ENCODE measurements at regions of chr5 and their contacts with region 1.

Region 1: GRCh38 chr5:175478384-175479124 is at the start of gene SFXN1:
- DNase-seq: no peak
- ATAC-seq: peak; percentile 91
- H3K4me3 ChIP-seq: peak within 1 kb of the TSS; percentile 75
- H3K27ac ChIP-seq: peak within 1 kb of the TSS; percentile 66
- H3K4me1 ChIP-seq: no peaks in the 10 kb centered on the region
- H3K27me3 ChIP-seq: 0 out of 4 replicates have a peak, but pooled peaks cover 0 to 2% of the 10 kb centered on the region in 2 experiments
- CTCF ChIP-seq: no peak
- EP300 ChIP-seq: no peak
- POLR2A ChIP-seq: peak; percentile 91
- RAD21 ChIP-seq: no peak
- polyA plus RNA-seq, gene SFXN1: 18.0 to 24.6 TPM

Region 2: DNA sequence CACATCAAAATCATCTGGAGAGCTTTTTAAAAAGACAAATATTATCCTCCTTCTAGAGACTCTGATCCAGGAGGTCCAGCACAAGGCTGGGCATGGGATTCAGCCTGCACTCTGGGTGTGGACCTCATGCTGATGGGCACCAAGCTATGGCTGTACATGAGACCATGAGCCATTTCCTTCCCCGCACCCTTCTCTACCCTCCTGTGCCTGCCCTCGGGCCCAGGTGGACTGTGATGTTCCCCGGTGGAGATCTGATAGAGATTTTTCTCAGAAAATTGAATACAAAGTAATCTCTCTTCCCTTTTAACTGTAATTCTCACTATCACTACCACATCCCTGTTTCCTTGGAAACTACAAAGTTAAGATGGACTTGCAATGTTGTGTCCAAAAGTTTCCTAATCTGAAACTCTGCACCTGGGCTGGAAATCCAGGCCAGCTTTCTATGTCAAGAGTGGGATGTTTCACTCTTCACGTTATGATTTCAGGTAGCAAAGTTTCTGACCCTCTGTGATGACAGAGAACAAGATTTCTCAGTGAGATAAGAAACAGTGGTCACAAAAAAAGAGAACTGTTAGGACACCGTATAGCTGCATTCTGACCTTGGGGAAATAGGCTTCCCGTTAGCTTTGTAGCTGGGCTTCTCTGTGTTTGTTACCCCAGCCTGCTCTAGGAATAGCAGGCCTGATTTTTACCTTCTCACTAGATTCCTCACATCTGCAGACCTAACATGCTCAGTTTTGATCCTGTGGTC is 11.3 kb after region 1 on chr5:
- CTCF ChIA-PET with region 1: interaction called, 11 read pairs
- POLR2A ChIA-PET with region 1: interaction called, 3 read pairs
- RAD21 ChIA-PET with region 1: no interaction called
- SMC1A ChIA-PET with region 1: interaction called, 4 read pairs
- in situ Hi-C with region 1: no loop called
- intact Hi-C with region 1: no loop called
- DNase-seq: no peak
- ATAC-seq: no peak; the same call in 2 of the 3 replicates
- H3K4me3 ChIP-seq: no peak overlapping the region
- H3K27ac ChIP-seq: no peak overlapping the region
- H3K4me1 ChIP-seq: no peaks in the 10 kb centered on the region
- H3K27me3 ChIP-seq: no peaks in the 10 kb centered on the region
- CTCF ChIP-seq: no peak
- EP300 ChIP-seq: no peak
- POLR2A ChIP-seq: no peak
- RAD21 ChIP-seq: no peak